GM12878 (cell line): ENCODE measurements at regions of chr2 and their contacts with region 1.

Region 1: DNA sequence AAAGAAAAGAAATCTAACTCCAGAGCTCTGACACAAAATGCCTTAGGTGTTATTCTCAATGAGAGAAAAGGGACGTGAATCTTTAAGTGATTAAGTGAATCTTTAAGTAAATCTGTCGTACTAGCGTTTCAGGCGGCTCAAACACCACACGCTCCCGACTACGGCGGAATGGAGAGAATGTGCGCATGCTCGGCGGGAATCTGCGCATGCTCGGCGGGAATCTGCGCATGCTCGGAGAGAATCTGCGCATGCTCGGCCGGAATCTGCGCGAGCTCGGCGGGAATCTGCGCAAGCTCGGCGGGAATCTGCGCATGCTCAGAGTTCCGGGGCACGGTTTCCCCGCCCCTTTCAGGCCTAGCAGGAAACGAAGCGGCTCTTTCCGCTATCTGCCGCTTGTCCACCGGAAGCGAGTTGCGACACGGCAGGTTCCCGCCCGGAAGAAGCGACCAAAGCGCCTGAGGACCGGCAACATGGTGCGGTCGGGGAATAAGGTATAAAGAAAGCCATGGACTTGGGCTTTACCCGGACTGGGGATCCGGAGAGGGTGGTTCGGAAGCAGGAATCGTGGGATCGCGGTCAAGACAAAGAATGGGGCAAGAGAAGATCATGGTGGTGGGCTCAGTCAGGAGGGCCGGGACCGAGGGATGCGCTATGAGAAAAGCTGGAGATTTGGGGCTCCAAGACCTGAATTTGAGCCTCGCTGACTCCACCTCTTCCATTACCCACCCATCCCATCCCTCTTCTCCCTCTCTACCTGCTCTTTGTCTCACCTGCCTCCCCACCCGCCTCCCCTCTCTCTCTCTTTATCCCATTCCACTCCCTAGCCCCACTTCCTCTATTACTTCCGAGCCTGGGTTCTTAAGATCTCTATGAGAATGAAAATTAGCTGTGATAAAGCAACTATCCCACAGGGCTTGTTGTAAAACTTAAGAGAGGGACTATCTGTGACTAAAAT is at the start of gene XRCC5:
- DNase-seq: peak; percentile 96
- ATAC-seq: peak; percentile 57
- H3K4me3 ChIP-seq: peak within 1 kb of the TSS; percentile 94
- H3K27ac ChIP-seq: peak within 1 kb of the TSS; percentile 99
- H3K4me1 ChIP-seq: peaks cover 26% of the 10 kb centered on the region
- H3K27me3 ChIP-seq: no peaks in the 10 kb centered on the region
- CTCF ChIP-seq: no peak
- EP300 ChIP-seq: no peak
- POLR2A ChIP-seq: peak; percentile 94
- RAD21 ChIP-seq: no peak
- polyA plus RNA-seq, gene XRCC5: 552 to 556 TPM

Region 2: GRCh38 chr2:216057688-216058193 is 51.5 kb before region 1 on chr2:
- CTCF ChIA-PET with region 1: interaction called, 24 read pairs
- POLR2A ChIA-PET with region 1: interaction called, 8 read pairs
- RAD21 ChIA-PET with region 1: interaction called, 9 read pairs
- SMC1A ChIA-PET with region 1: interaction called, 59 read pairs
- in situ Hi-C with region 1: no loop called
- intact Hi-C with region 1: loop called (anchors 1 kb)
- DNase-seq: peak; percentile 96
- ATAC-seq: peak; percentile 93
- H3K4me3 ChIP-seq: peak overlapping the region; percentile 62
- H3K27ac ChIP-seq: peak overlapping the region; percentile 85
- H3K4me1 ChIP-seq: peaks cover 24% of the 10 kb centered on the region
- H3K27me3 ChIP-seq: no peaks in the 10 kb centered on the region
- CTCF ChIP-seq: no peak
- EP300 ChIP-seq: peak; percentile 55 to 66; a peak in 2 of 4 replicates
- POLR2A ChIP-seq: peak; percentile 68; the same call in 1 of the 2 replicates
- RAD21 ChIP-seq: no peak

Region 3: GRCh38 chr2:216090369-216090786 is 18.9 kb before region 1 on chr2:
- CTCF ChIA-PET with region 1: interaction called, 11 read pairs
- POLR2A ChIA-PET with region 1: interaction called, 42 read pairs
- RAD21 ChIA-PET with region 1: interaction called, 5 read pairs
- SMC1A ChIA-PET with region 1: interaction called, 18 read pairs
- in situ Hi-C with region 1: no loop called
- intact Hi-C with region 1: no loop called
- DNase-seq: no peak
- ATAC-seq: peak; percentile 70
- H3K4me3 ChIP-seq: peak overlapping the region; percentile 25; the same call in 1 of the 2 replicates
- H3K27ac ChIP-seq: peak overlapping the region; percentile 49
- H3K4me1 ChIP-seq: peaks cover 18% of the 10 kb centered on the region
- H3K27me3 ChIP-seq: no peaks in the 10 kb centered on the region
- CTCF ChIP-seq: no peak
- EP300 ChIP-seq: no peak
- POLR2A ChIP-seq: no peak
- RAD21 ChIP-seq: no peak

Region 4: GRCh38 chr2:216139884-216140283 is 30.6 kb after region 1 on chr2:
- CTCF ChIA-PET with region 1: interaction called, 35 read pairs
- POLR2A ChIA-PET with region 1: interaction called, 7 read pairs
- RAD21 ChIA-PET with region 1: interaction called, 42 read pairs
- SMC1A ChIA-PET with region 1: interaction called, 31 read pairs
- in situ Hi-C with region 1: no loop called
- intact Hi-C with region 1: no loop called
- DNase-seq: no peak
- ATAC-seq: peak; percentile 57
- H3K4me3 ChIP-seq: no peak overlapping the region
- H3K27ac ChIP-seq: no peak overlapping the region
- H3K4me1 ChIP-seq: peaks cover 17% of the 10 kb centered on the region
- H3K27me3 ChIP-seq: no peaks in the 10 kb centered on the region
- CTCF ChIP-seq: peak; percentile 42 to 49 (median 42); a peak in 4 of 6 replicates
- EP300 ChIP-seq: no peak
- POLR2A ChIP-seq: no peak
- RAD21 ChIP-seq: peak; percentile 51